GM10248 (cell line): ENCODE measurements at regions of chr7 and their contacts with region 1.

Region 1: DNA sequence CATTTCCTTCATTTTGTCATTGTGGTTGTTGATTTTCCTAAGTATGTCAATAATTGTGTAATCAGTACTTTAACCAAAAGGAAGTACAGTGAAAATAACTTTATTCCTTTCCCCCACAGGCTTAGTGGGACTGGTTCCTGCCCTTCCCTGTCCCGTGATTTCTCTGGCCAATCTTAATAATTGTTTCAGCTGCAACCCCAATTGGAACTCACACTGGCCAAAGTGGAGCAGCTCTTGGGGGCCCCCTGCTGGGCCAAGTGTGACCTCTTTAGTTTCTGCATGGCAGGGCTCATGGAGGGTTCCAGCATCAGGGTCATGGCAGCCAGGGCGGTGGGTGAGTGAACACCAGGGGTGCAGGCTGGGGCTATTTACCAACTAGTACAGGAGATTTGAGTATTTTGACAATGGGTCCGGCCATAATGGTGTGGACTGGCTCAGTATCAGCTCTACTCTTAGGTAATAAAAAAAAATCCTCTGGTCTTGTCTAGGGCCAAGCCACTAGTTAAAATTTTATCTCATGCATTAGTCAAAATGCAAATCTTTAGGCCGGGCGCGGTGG is 31.7 kb downstream of the CYCS start:
- DNase-seq: peak; percentile 82
- CTCF ChIP-seq: peak; percentile 84

Region 2: GRCh38 chr7:24757353-24758275 is 335.7 kb before region 1 on chr7 and contains the start of gene GSDME:
- CTCF ChIA-PET with region 1: interaction called, 14 read pairs
- POLR2A ChIA-PET with region 1: no interaction called
- DNase-seq: peak; percentile 87
- CTCF ChIP-seq: peak; percentile 25

Region 3: GRCh38 chr7:24819916-24820689 is 273.2 kb before region 1 on chr7:
- CTCF ChIA-PET with region 1: interaction called, 312 read pairs
- POLR2A ChIA-PET with region 1: no interaction called
- DNase-seq: peak; percentile 81
- CTCF ChIP-seq: peak; percentile 75

Region 4: GRCh38 chr7:24877790-24878311 is 215.5 kb before region 1 on chr7:
- CTCF ChIA-PET with region 1: interaction called, 11 read pairs
- POLR2A ChIA-PET with region 1: no interaction called
- DNase-seq: peak; percentile 36
- CTCF ChIP-seq: no peak

Region 5: DNA sequence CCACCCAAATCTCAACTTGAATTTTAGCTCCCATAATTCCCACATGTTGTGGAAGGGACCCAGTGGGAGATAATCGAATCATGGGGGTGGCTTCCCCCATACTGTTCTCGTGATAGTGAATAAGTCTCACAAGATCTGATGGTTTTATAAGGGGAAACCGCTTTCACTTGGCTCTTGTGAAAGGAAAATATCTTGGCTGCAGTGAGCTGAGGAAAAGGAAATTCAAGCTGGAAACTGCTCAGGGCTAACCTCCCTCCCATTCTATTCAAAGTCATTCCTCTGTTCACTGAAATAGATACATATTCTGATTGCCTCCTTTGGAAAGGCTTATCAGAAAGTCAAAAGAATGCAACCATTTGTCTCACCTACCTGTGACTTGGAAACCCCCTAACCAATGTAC is 15.9 kb after region 1 on chr7:
- CTCF ChIA-PET with region 1: interaction called, 57 read pairs
- POLR2A ChIA-PET with region 1: no interaction called
- DNase-seq: no peak
- CTCF ChIP-seq: no peak

Region 6: DNA sequence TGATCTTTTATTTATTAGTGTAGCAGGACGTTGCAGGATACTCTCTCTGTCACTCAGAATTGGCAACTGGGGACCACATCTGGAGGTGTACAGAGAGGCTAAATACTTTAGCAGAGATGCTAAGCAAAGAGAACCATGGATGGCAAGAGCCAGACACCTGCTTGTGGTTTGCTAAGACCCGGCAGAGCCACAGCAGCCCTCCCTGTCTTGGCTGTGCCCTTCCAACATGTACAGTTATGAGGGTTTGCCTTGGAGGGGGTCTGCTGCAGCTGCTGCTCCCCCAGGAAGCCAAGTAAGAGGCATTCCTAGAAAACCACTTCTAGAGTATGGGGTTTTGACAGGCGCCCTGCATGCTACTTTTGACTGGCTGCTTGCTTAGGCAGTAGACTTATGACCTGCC is 129.9 kb after region 1 on chr7:
- CTCF ChIA-PET with region 1: no interaction called
- POLR2A ChIA-PET with region 1: no interaction called
- DNase-seq: no peak
- CTCF ChIP-seq: no peak

Region 7: GRCh38 chr7:25240340-25240739 is 147.0 kb after region 1 on chr7:
- CTCF ChIA-PET with region 1: no interaction called
- POLR2A ChIA-PET with region 1: no interaction called
- DNase-seq: no peak
- CTCF ChIP-seq: no peak